PC-3 (cell line): ENCODE measurements at regions of chr1 and their contacts with region 1.

Region 1: GRCh38 chr1:33367485-33368405 is 46.8 kb upstream of the A3GALT2 start:
- DNase-seq: peak; percentile 81
- ATAC-seq: peak; percentile 86
- H3K4me3 ChIP-seq: no peak overlapping the region
- H3K27ac ChIP-seq: no peak overlapping the region
- H3K4me1 ChIP-seq: no peaks in the 10 kb centered on the region
- H3K27me3 ChIP-seq: no peaks in the 10 kb centered on the region
- CTCF ChIP-seq: peak; percentile 92

Region 2: GRCh38 chr1:33127001-33127791 is 240.5 kb before region 1 on chr1:
- CTCF ChIA-PET with region 1: no interaction called
- POLR2A ChIA-PET with region 1: no interaction called
- intact Hi-C with region 1: no loop called
- DNase-seq: peak; percentile 99
- ATAC-seq: peak; percentile 96
- H3K4me3 ChIP-seq: peak overlapping the region; percentile 83
- H3K27ac ChIP-seq: peak overlapping the region; percentile 50
- H3K4me1 ChIP-seq: peaks cover 9% of the 10 kb centered on the region
- H3K27me3 ChIP-seq: no peaks in the 10 kb centered on the region
- CTCF ChIP-seq: peak; percentile 97

Region 3: GRCh38 chr1:33219881-33220661 is 147.7 kb before region 1 on chr1:
- CTCF ChIA-PET with region 1: no interaction called
- POLR2A ChIA-PET with region 1: no interaction called
- intact Hi-C with region 1: loop called (anchors 5 kb)
- DNase-seq: peak; percentile 94
- ATAC-seq: peak; percentile 85
- H3K4me3 ChIP-seq: no peak overlapping the region
- H3K27ac ChIP-seq: peak overlapping the region; percentile 67
- H3K4me1 ChIP-seq: peaks cover 34% of the 10 kb centered on the region
- H3K27me3 ChIP-seq: no peaks in the 10 kb centered on the region
- CTCF ChIP-seq: no peak

Region 4: GRCh38 chr1:33455539-33456501 is 88.1 kb after region 1 on chr1:
- CTCF ChIA-PET with region 1: interaction called, 3 read pairs
- POLR2A ChIA-PET with region 1: no interaction called
- intact Hi-C with region 1: loop called (anchors 5 kb)
- DNase-seq: peak; percentile 83
- ATAC-seq: peak; percentile 89
- H3K4me3 ChIP-seq: no peak overlapping the region
- H3K27ac ChIP-seq: peak overlapping the region; percentile 6; the same call in 1 of the 2 replicates
- H3K4me1 ChIP-seq: peaks cover 34% of the 10 kb centered on the region
- H3K27me3 ChIP-seq: no peaks in the 10 kb centered on the region
- CTCF ChIP-seq: peak; percentile 89

Region 5: DNA sequence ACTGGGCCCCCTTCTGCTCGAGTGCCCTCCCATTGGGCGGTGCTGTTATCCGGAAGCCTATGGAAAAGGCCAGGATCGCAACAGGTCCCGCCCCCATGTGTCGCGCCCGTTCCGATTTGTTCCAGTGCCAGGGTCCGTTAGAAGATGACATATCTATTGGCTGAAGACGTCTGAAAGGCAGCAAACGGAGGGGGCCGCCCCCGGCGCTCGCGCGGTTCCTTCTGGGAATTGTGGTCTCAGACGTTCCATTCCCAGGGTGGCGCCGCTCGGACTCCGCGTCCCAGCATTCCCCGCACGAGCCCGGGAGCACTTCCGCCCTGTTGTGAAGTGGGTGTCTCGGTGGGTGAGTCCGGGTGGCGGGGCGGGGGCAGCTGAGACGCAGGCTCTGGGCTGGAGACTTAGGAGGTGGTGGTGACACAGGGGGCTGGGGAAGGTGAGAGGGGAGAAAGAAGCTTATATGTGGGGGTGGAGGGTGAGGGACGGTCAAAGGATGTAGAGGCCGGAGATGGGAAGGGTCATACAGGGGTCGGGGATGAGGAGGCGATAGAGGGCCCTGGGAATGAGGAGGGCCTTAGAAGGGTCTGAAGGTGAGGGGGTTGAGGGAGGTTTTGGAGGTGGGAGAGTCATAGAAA is 104.7 kb after region 1 on chr1 and contains the start of gene ZSCAN20:
- CTCF ChIA-PET with region 1: interaction called, 5 read pairs
- POLR2A ChIA-PET with region 1: no interaction called
- intact Hi-C with region 1: loop called (anchors 5 kb)
- DNase-seq: peak; percentile 80
- ATAC-seq: peak; percentile 70
- H3K4me3 ChIP-seq: peak within 1 kb of the TSS; percentile 67
- H3K27ac ChIP-seq: no peak within 1 kb of the TSS
- H3K4me1 ChIP-seq: no peaks in the 10 kb centered on the region
- H3K27me3 ChIP-seq: peaks cover 7% of the 10 kb centered on the region; the same call in 1 of the 2 replicates
- CTCF ChIP-seq: no peak
- total RNA-seq, gene ZSCAN20: 0.84 and 1.6 TPM in 2 replicates

Region 6: DNA sequence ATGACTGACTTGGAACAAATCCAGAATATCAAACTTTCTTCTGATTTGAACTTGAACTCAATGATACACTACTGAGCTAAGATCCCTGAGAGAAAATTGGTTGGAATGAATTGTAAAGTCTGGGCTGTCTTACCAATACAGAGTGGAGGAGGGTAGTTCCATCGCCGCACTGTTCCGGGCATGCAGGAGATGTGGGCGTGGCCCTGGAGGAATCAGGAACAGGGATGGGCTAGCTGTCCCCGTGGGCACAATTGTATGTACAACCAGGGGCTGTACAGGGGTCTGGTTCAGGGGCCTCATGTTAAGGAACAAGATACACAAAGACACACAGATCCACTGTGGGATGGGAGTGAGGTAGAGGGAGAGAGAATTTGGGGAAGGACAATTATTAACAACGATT is 249.0 kb after region 1 on chr1:
- CTCF ChIA-PET with region 1: no interaction called
- POLR2A ChIA-PET with region 1: no interaction called
- intact Hi-C with region 1: loop called (anchors 10 kb)
- DNase-seq: no peak
- ATAC-seq: no peak
- H3K4me3 ChIP-seq: no peak overlapping the region
- H3K27ac ChIP-seq: no peak overlapping the region
- H3K4me1 ChIP-seq: no peaks in the 10 kb centered on the region
- H3K27me3 ChIP-seq: peaks cover 81% of the 10 kb centered on the region
- CTCF ChIP-seq: no peak